Lower leg skin (tissue), 4 donors: ENCODE measurements at regions of chr17 and their contacts with region 1.

Region 1: GRCh38 chr17:70767102-70767701 is 597.9 kb downstream of the KCNJ2 start:
- DNase-seq: no peak
- H3K4me3 ChIP-seq: no peak overlapping the region
- CTCF ChIP-seq: no peak
- POLR2A ChIP-seq: no peak

Region 2: DNA sequence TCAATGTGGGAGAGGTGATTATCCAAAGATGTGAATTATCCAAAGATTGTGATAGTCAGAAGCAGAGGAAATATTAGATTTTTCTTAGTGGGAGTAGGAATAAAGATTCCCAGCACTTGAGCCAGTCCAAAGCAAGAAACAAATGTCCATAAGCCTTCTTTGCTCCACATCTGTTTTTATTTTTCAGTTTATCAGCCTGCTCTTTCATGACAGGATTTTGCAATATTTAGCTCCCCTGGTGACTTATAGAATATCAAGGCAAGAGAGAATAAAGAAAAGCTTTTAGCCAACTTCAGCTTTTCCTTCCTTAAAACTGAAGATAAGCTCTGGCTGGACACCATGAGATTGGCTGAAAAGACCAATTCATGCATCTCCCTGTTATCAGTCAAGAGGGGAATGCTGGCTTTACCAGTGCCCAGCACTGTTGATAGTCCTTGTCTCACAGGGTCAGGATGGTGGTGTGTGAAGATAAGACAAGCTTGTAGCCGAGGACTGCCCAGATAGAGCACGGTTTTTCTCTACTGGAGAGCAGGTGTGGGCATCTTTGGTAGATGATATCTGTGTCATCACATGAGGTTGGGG is 108.6 kb after region 1 on chr17:
- intact Hi-C with region 1: no loop called
- DNase-seq: no peak
- H3K4me3 ChIP-seq: no peak overlapping the region
- CTCF ChIP-seq: no peak
- POLR2A ChIP-seq: no peak

Region 3: GRCh38 chr17:72539981-72540897 is 1773.0 kb after region 1 on chr17:
- intact Hi-C with region 1: loop called (anchors 10 kb)
- DNase-seq: peak; percentile 46 to 94
- H3K4me3 ChIP-seq: no peak overlapping the region
- CTCF ChIP-seq: peak in 1 of 3 donors; percentile 76
- POLR2A ChIP-seq: no peak